ENCODE measurements at regions of chr6 and their contacts with region 1.

Region 1: GRCh38 chr6:167306400-167306998 is 15.4 kb downstream of the UNC93A start:
- DNase-seq: peak; percentile 50
- ATAC-seq: no peak
- H3K4me3 ChIP-seq: no peak overlapping the region
- H3K27ac ChIP-seq: peak overlapping the region; percentile 2
- H3K4me1 ChIP-seq: peaks cover 81% of the 10 kb centered on the region
- H3K27me3 ChIP-seq: no peaks in the 10 kb centered on the region
- CTCF ChIP-seq: no peak
- EP300 ChIP-seq: no peak
- POLR2A ChIP-seq: no peak
- RAD21 ChIP-seq: no peak

Region 2: DNA sequence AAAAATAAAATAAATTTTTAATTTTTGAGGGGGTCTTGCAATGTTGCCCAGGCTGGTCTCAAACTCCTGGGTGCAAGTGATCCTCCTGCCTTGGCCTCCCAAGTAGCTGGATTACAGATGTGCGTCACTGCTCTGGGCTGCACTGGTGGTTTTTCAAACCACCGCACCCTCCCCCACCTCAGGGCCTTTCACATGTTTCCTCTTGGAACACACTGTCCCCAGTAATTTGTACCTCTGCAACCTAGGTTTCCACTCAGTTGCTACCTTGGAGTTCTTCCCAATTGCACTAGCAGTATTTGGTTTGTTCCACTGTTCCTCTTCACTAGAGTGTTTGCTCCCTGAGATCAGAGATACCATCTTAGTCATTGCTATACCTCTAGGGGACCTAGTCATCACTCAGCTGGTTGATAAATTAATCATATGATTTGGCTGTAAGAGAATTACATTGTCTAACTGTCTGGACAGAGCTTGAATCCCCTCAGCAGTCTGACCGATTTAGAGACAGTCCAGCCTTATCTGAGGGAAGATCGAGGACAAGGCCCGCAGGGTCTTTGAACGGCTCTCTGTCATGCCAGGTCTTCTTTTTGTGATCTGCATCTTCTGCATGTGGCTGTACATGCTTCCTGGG is 275.3 kb before region 1 on chr6:
- CTCF ChIA-PET with region 1: no interaction called
- POLR2A ChIA-PET with region 1: no interaction called
- in situ Hi-C with region 1: no loop called
- intact Hi-C with region 1: no loop called
- DNase-seq: no peak
- ATAC-seq: no peak
- H3K4me3 ChIP-seq: no peak overlapping the region
- H3K27ac ChIP-seq: no peak overlapping the region
- H3K4me1 ChIP-seq: no peaks in the 10 kb centered on the region
- H3K27me3 ChIP-seq: no peaks in the 10 kb centered on the region; a peak in 1 of 5 replicates
- CTCF ChIP-seq: no peak
- EP300 ChIP-seq: no peak
- POLR2A ChIP-seq: no peak
- RAD21 ChIP-seq: no peak

Region 3: DNA sequence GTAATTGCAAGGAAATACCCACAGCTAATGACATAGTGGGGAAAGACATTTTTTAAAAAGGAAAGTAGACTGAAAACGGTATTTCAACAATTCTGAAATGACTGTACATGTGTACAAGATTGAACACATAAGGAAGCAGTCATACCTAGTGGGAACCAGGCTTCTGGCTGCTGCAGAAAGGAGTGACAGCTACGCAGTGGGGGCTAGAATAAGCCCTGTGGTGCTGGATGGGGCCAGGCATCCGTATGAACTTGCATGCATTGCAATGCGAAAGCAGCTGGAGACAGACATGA is 93.8 kb before region 1 on chr6:
- CTCF ChIA-PET with region 1: no interaction called
- POLR2A ChIA-PET with region 1: interaction called, 51 read pairs
- in situ Hi-C with region 1: no loop called
- intact Hi-C with region 1: no loop called
- DNase-seq: no peak
- ATAC-seq: no peak
- H3K4me3 ChIP-seq: no peak overlapping the region
- H3K27ac ChIP-seq: no peak overlapping the region
- H3K4me1 ChIP-seq: peaks cover 81% of the 10 kb centered on the region
- H3K27me3 ChIP-seq: no peaks in the 10 kb centered on the region
- CTCF ChIP-seq: no peak
- EP300 ChIP-seq: no peak
- POLR2A ChIP-seq: no peak
- RAD21 ChIP-seq: no peak

Region 4: DNA sequence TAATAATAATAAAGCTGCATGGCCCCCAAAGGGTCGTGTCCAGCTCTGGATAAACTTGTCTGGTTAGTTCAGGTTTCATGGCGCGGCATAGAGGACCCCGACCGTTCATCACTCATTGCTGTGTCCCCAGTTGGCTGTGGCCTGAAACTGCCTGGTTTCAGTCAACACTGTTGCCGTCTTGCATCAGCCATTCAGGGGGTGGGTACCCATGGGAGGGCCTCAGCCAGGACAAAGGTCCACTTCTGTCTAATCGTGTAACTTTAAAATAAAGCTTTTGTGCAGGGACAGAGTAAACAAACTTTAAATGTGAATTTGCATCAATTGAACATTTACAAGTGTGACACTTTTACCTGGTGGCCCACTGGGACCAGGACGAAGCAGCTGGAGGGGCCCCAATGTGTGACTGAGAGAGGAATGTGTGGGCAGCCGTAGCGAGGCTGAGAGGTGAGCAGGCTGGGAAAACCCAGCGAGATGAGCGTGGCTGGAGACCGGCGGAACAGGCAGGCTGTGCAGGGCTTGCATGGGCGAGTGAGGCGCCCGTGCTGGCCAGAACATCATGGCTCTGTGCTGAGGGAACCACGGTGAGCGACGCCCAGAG is 37.7 kb before region 1 on chr6:
- CTCF ChIA-PET with region 1: no interaction called
- POLR2A ChIA-PET with region 1: interaction called, 46 read pairs
- in situ Hi-C with region 1: no loop called
- intact Hi-C with region 1: no loop called
- DNase-seq: peak; percentile 93
- ATAC-seq: peak; percentile 95
- H3K4me3 ChIP-seq: peak overlapping the region; percentile 2 to 58 (median 5); a peak in 3 of 6 replicates
- H3K27ac ChIP-seq: peak overlapping the region; percentile 88
- H3K4me1 ChIP-seq: peaks cover 88% of the 10 kb centered on the region
- H3K27me3 ChIP-seq: no peaks in the 10 kb centered on the region
- CTCF ChIP-seq: peak; percentile 24; the same call in 1 of the 2 replicates
- EP300 ChIP-seq: peak; percentile 71 to 94; a peak in 3 of 4 replicates
- POLR2A ChIP-seq: peak; percentile 74 to 83
- RAD21 ChIP-seq: peak; percentile 74

Region 5: GRCh38 chr6:167291623-167292300 is 14.7 kb before region 1 on chr6:
- CTCF ChIA-PET with region 1: no interaction called
- POLR2A ChIA-PET with region 1: interaction called, 163 read pairs
- in situ Hi-C with region 1: no loop called
- intact Hi-C with region 1: loop called (anchors 1 kb)
- DNase-seq: peak; percentile 77
- ATAC-seq: peak; percentile 48
- H3K4me3 ChIP-seq: peak overlapping the region; percentile 38 to 53 (median 38); a peak in 4 of 6 replicates
- H3K27ac ChIP-seq: peak overlapping the region; percentile 77
- H3K4me1 ChIP-seq: peaks cover 75% of the 10 kb centered on the region
- H3K27me3 ChIP-seq: no peaks in the 10 kb centered on the region
- CTCF ChIP-seq: peak; percentile 34; the same call in 1 of the 2 replicates
- EP300 ChIP-seq: peak in 1 of 2 experiments; percentile 63; a peak in 1 of 4 replicates
- POLR2A ChIP-seq: no peak; a peak in 1 of 4 replicates
- RAD21 ChIP-seq: peak; percentile 15

Region 6: DNA sequence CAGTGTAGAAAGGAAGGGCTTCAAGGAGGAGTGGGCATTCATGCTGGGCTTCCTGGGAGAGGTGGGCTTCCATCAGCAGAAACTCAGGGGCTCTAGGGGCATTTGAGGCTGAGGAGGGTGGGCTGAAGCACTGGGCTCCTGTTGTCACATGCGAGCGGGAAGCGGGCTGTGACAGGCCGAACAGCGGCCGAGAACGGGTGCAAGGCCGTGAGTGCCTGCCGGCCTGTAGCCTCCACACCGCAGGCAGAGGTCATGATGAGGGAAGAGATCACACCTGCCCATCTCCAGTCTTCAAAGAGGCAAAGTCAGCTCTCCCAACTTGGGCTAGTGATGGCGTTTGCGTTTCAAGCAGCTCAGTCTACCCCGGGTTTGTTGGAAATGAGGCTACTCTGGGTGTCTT is 19.3 kb after region 1 on chr6:
- CTCF ChIA-PET with region 1: no interaction called
- POLR2A ChIA-PET with region 1: interaction called, 10 read pairs
- in situ Hi-C with region 1: no loop called
- intact Hi-C with region 1: no loop called
- DNase-seq: no peak
- ATAC-seq: no peak
- H3K4me3 ChIP-seq: no peak overlapping the region
- H3K27ac ChIP-seq: no peak overlapping the region
- H3K4me1 ChIP-seq: peaks cover 39% of the 10 kb centered on the region
- H3K27me3 ChIP-seq: no peaks in the 10 kb centered on the region
- CTCF ChIP-seq: no peak
- EP300 ChIP-seq: no peak
- POLR2A ChIP-seq: no peak
- RAD21 ChIP-seq: no peak

Region 7: GRCh38 chr6:167350731-167351655 is 44.5 kb after region 1 on chr6:
- CTCF ChIA-PET with region 1: no interaction called
- POLR2A ChIA-PET with region 1: interaction called, 25 read pairs
- in situ Hi-C with region 1: no loop called
- intact Hi-C with region 1: no loop called
- DNase-seq: no peak
- ATAC-seq: no peak; the same call in 2 of the 3 replicates
- H3K4me3 ChIP-seq: no peak overlapping the region
- H3K27ac ChIP-seq: no peak overlapping the region
- H3K4me1 ChIP-seq: peaks cover 40% of the 10 kb centered on the region
- H3K27me3 ChIP-seq: no peaks in the 10 kb centered on the region
- CTCF ChIP-seq: peak; percentile 62
- EP300 ChIP-seq: no peak
- POLR2A ChIP-seq: no peak
- RAD21 ChIP-seq: 0 out of 2 replicates have a peak, but pooled peaks have one; percentile 8